ENCODE measurements at regions of chr10 and their contacts with region 1.

Region 1: GRCh38 chr10:28663576-28664313 is 13.6 kb upstream of the BAMBI start:
- DNase-seq: peak; percentile 46 to 69 (median 61)
- H3K4me3 ChIP-seq: no peak overlapping the region
- H3K4me3 Mint-ChIP-seq: no peak overlapping the region
- H3K27ac ChIP-seq: no peak overlapping the region
- H3K27ac Mint-ChIP-seq: no peak overlapping the region
- H3K4me1 ChIP-seq: peaks cover 3% of the 10 kb centered on the region in 2 donors
- H3K4me1 Mint-ChIP-seq: peaks cover 8% of the 10 kb centered on the region
- H3K27me3 ChIP-seq: peaks cover 15 to 37% of the 10 kb centered on the region in 2 donors
- H3K27me3 Mint-ChIP-seq: peaks cover 42 to 55% (median 44%) of the 10 kb centered on the region in 3 donors
- CTCF ChIP-seq: peak; percentile 96

Region 2: DNA sequence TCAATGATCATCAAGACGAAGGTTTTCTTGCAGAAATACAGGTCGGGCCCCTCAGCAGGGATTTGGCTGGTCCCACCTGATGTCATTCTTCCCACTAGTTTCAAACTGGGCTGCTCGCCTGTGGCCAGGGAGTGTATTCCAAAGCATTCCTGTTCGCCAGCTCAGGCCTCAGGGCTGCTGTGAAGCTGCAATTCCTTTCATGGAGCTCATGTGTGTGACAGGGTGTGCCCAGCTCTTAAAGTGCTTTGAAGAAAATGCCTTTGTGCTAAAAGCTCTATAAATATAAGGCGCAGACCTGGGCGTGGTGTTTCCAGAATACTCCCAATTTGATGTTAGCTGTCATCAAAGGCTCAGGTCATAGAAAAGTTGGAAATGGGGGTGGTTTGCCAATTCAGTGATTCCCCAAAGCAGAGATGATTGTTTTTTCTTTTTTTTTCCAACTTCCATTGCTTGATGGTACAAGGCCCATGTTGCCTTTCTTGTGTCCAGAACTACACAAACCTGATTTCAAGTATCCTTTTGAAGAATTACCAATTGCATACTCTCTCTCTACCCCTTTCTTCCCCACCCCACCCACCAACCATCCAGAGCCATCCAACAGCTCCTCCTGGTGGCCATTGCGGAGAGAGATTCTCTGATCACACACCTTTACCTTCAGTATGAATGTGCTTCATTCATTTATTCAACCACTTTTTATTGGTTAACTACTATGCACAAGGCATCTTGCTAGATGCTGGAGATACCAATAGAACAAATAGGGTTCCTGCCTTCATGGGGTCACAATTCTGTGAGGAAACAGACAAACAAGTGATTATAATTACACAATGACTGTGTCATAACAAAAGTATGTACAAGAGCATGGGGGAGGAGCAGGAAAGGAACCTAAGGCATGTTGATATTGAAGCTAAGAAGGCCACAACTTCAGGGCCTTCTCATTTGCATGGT is 327.9 kb after region 1 on chr10:
- intact Hi-C with region 1: loop called (anchors 2 kb)
- DNase-seq: peak; percentile 6 to 36 (median 7)
- H3K4me3 ChIP-seq: no peak overlapping the region
- H3K4me3 Mint-ChIP-seq: no peak overlapping the region
- H3K27ac ChIP-seq: no peak overlapping the region
- H3K27ac Mint-ChIP-seq: no peak overlapping the region
- H3K4me1 ChIP-seq: no peaks in the 10 kb centered on the region
- H3K4me1 Mint-ChIP-seq: no peaks in the 10 kb centered on the region
- H3K27me3 ChIP-seq: no peaks in the 10 kb centered on the region
- H3K27me3 Mint-ChIP-seq: peaks cover 7 to 14% (median 13%) of the 10 kb centered on the region in 3 donors
- CTCF ChIP-seq: peak; percentile 61

Region 3: GRCh38 chr10:29304264-29305030 is 640.7 kb after region 1 on chr10:
- intact Hi-C with region 1: loop called in 1 of 2 experiments (anchors 10 kb)
- DNase-seq: peak in 2 of 3 donors; percentile 4 to 16
- H3K4me3 ChIP-seq: no peak overlapping the region
- H3K4me3 Mint-ChIP-seq: peak overlapping the region in 1 of 2 donors; percentile 33
- H3K27ac ChIP-seq: no peak overlapping the region
- H3K27ac Mint-ChIP-seq: peak overlapping the region in 1 of 7 donors; percentile 54
- H3K4me1 ChIP-seq: peaks cover 0 to 4% of the 10 kb centered on the region in 2 donors
- H3K4me1 Mint-ChIP-seq: peaks cover 6% of the 10 kb centered on the region
- H3K27me3 ChIP-seq: peaks cover 0 to 6% of the 10 kb centered on the region in 2 donors
- H3K27me3 Mint-ChIP-seq: peaks cover 2 to 13% (median 3%) of the 10 kb centered on the region in 3 donors
- CTCF ChIP-seq: peak; percentile 54

Measured in CD14-positive monocyte (primary cell).